Posterior vena cava (tissue), 2 donors: ENCODE measurements at regions of chr13 and their contacts with region 1.

Region 1: GRCh38 chr13:29532116-29532515 is 63.4 kb downstream of the SLC7A1 start:
- DNase-seq: no peak

Region 2: GRCh38 chr13:29496240-29496712 is 35.8 kb before region 1 on chr13:
- intact Hi-C with region 1: no loop called
- DNase-seq: no peak

Region 3: GRCh38 chr13:29572575-29572974 is 40.5 kb after region 1 on chr13:
- intact Hi-C with region 1: loop called in 1 of 2 experiments (anchors 1 kb)
- DNase-seq: no peak

Region 4: GRCh38 chr13:31134039-31134711 is 1602.1 kb after region 1 on chr13:
- intact Hi-C with region 1: no loop called
- DNase-seq: no peak